Breast epithelium (tissue), 4 donors: ENCODE measurements at regions of chrX and their contacts with region 1.

Region 1: DNA sequence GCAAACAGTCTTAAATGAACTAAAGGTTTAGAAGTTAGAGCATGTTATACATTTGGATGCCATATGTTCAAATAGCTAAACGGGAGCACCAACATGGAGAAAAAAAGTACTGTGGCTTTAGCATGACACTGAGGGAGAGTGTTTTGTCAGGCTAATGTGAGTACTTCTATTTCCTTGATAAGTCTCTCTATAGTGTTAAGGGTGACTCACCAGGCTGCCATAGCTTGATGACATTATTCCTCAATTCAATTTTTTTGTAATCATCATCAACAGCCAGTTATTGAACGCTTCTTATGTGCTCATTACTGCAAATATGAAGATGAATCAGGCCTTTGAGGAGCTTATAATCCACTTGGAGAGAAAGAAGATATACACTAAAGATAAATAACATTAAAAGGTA is 211.4 kb upstream of the GPR101 start:
- DNase-seq: no peak
- H3K4me3 ChIP-seq: no peak overlapping the region
- H3K27ac ChIP-seq: no peak overlapping the region
- H3K4me1 ChIP-seq: no peaks in the 10 kb centered on the region
- H3K27me3 ChIP-seq: peaks cover 0 to 21% of the 10 kb centered on the region in 2 donors
- CTCF ChIP-seq: no peak
- POLR2A ChIP-seq: no peak

Region 2: DNA sequence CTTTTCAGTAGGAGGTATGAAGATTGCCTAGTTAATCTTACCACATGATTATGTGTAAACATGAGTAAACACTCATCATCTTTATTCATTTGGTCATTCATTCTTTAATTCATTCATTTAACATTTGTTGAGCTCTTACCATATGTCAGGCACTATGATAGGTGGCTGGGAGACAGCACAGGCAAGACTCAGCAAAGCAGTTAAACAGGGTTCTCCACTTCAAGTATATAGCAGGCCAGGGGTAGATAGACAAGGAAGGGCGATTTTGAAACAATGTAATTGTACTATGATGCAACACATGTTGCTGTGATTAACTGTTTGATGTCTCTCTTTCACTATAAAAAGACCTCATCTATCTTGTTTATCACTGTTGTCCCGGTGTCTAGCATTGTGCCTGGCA is 127.0 kb before region 1 on chrX:
- intact Hi-C with region 1: no loop called
- DNase-seq: no peak
- H3K4me3 ChIP-seq: no peak overlapping the region
- H3K27ac ChIP-seq: no peak overlapping the region
- H3K4me1 ChIP-seq: no peaks in the 10 kb centered on the region
- H3K27me3 ChIP-seq: peaks cover 0 to 15% of the 10 kb centered on the region in 2 donors
- CTCF ChIP-seq: no peak
- POLR2A ChIP-seq: no peak

Region 3: GRCh38 chrX:137297166-137297565 is 52.0 kb after region 1 on chrX:
- intact Hi-C with region 1: loop called (anchors 2 kb)
- DNase-seq: no peak
- H3K4me3 ChIP-seq: no peak overlapping the region
- H3K27ac ChIP-seq: no peak overlapping the region
- H3K4me1 ChIP-seq: no peaks in the 10 kb centered on the region
- H3K27me3 ChIP-seq: peaks cover 0 to 15% of the 10 kb centered on the region in 2 donors
- CTCF ChIP-seq: no peak
- POLR2A ChIP-seq: no peak